B cell (primary cell): ENCODE measurements at regions of chr21 and their contacts with region 1.

Region 1: DNA sequence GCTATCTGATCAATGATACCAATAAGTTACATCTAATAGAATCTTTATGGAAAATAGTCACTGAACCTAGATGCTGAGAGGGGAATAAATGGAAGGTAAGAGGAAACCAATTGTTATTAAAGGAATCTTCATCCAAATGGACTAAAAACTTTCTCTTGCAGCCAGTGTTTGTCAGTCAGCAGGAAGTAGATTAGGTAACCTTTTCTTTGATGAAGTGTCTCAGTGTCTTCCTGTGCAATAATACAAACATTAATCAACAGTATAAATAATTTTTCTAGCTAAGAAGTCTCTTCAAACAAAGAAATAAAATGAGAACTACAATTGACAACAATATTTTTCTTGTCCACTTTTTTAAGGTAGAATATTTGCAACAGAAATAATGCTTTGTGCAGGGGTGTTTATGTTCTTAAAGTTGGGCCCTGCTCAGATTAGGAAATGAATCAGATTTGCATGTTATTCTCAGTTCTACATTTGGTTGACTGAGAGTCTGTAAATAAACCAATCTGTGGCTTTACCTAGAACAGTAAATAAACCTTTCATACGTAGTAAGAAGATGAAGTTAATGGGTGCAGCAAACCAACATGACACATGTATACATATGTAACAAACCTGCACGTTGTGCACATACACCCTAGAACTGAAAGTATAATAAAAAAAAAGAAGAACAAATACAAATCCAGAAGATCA is 391.4 kb downstream of the MRPL39 start:
- DNase-seq: peak; percentile 75
- ATAC-seq: peak; percentile 85
- H3K4me3 ChIP-seq: peak overlapping the region in 1 of 5 experiments; percentile 44
- H3K4me3 Mint-ChIP-seq: peak overlapping the region; percentile 7
- H3K27ac ChIP-seq: peak overlapping the region; percentile 53 to 57
- H3K27ac Mint-ChIP-seq: peak overlapping the region; percentile 44
- H3K4me1 ChIP-seq: peaks cover 21 to 29% of the 10 kb centered on the region in 2 donors
- H3K4me1 Mint-ChIP-seq: peaks cover 35% of the 10 kb centered on the region
- H3K27me3 ChIP-seq: no peaks in the 10 kb centered on the region
- H3K27me3 Mint-ChIP-seq: no peaks in the 10 kb centered on the region
- CTCF ChIP-seq: no peak

Region 2: DNA sequence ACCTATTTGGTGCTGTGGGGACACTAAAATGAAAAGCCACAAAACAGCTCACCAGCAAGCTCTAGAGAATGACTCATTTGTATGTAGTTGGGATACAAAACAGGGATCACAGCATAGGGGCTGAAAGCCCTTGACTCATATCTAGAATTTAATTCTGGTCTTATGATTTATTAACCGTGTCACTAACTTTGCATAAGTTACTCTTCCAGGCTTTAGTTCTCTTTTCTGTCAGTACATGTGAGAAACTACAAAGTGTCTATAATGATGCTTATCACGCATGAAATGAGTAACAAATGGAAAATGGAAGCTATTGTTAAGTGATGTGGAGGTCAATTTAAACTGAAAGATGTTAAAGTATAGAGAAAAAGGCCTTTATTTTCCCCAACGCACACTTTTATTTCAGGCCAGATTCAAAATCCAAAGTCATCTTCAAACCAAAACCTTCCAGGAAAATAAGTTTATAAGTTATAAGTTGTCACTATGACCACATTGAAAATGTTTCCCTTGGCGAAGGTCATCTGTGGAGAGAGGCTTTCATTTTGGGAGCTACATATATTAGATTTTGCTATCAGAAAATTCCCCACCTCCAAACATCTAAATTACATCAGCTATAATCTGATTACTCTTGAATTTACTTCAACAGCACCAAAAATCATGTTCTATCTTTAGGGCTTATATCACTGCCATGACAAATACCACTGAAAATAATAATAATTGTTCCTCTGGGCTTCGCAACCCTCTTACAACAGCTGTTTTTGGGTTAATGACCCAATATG is 39.0 kb before region 1 on chr21:
- CTCF ChIA-PET with region 1: no interaction called
- POLR2A ChIA-PET with region 1: no interaction called
- intact Hi-C with region 1: loop called (anchors 5 kb)
- DNase-seq: peak; percentile 77
- ATAC-seq: peak; percentile 80
- H3K4me3 ChIP-seq: peak overlapping the region in 1 of 5 experiments; percentile 34
- H3K4me3 Mint-ChIP-seq: peak overlapping the region; percentile 3
- H3K27ac ChIP-seq: peak overlapping the region; percentile 83 to 92
- H3K27ac Mint-ChIP-seq: peak overlapping the region; percentile 53
- H3K4me1 ChIP-seq: peaks cover 40 to 46% of the 10 kb centered on the region in 2 donors
- H3K4me1 Mint-ChIP-seq: peaks cover 62% of the 10 kb centered on the region
- H3K27me3 ChIP-seq: no peaks in the 10 kb centered on the region
- H3K27me3 Mint-ChIP-seq: no peaks in the 10 kb centered on the region
- CTCF ChIP-seq: no peak

Region 3: GRCh38 chr21:25234857-25235801 is 19.3 kb after region 1 on chr21:
- CTCF ChIA-PET with region 1: no interaction called
- POLR2A ChIA-PET with region 1: no interaction called
- intact Hi-C with region 1: loop called (anchors 2 kb)
- DNase-seq: peak; percentile 42
- ATAC-seq: peak; percentile 58
- H3K4me3 ChIP-seq: peak overlapping the region in 1 of 5 experiments; percentile 43
- H3K4me3 Mint-ChIP-seq: peak overlapping the region; percentile 65
- H3K27ac ChIP-seq: peak overlapping the region; percentile 8 to 58
- H3K27ac Mint-ChIP-seq: peak overlapping the region; percentile 75
- H3K4me1 ChIP-seq: peaks cover 9 to 20% of the 10 kb centered on the region in 2 donors
- H3K4me1 Mint-ChIP-seq: peaks cover 31% of the 10 kb centered on the region
- H3K27me3 ChIP-seq: no peaks in the 10 kb centered on the region
- H3K27me3 Mint-ChIP-seq: no peaks in the 10 kb centered on the region
- CTCF ChIP-seq: no peak

Region 4: GRCh38 chr21:25273959-25274358 is 58.1 kb after region 1 on chr21:
- CTCF ChIA-PET with region 1: no interaction called
- POLR2A ChIA-PET with region 1: no interaction called
- intact Hi-C with region 1: no loop called
- DNase-seq: peak; percentile 6
- ATAC-seq: no peak
- H3K4me3 ChIP-seq: no peak overlapping the region
- H3K4me3 Mint-ChIP-seq: no peak overlapping the region
- H3K27ac ChIP-seq: no peak overlapping the region
- H3K27ac Mint-ChIP-seq: no peak overlapping the region
- H3K4me1 ChIP-seq: peaks cover 0 to 4% of the 10 kb centered on the region in 2 donors
- H3K4me1 Mint-ChIP-seq: peaks cover 10% of the 10 kb centered on the region
- H3K27me3 ChIP-seq: no peaks in the 10 kb centered on the region
- H3K27me3 Mint-ChIP-seq: no peaks in the 10 kb centered on the region
- CTCF ChIP-seq: no peak

Region 5: GRCh38 chr21:25550352-25551120 is 334.7 kb after region 1 on chr21:
- CTCF ChIA-PET with region 1: no interaction called
- POLR2A ChIA-PET with region 1: no interaction called
- intact Hi-C with region 1: no loop called
- DNase-seq: no peak
- ATAC-seq: no peak
- H3K4me3 ChIP-seq: no peak overlapping the region
- H3K4me3 Mint-ChIP-seq: no peak overlapping the region
- H3K27ac ChIP-seq: no peak overlapping the region
- H3K27ac Mint-ChIP-seq: no peak overlapping the region
- H3K4me1 ChIP-seq: no peaks in the 10 kb centered on the region
- H3K4me1 Mint-ChIP-seq: no peaks in the 10 kb centered on the region
- H3K27me3 ChIP-seq: no peaks in the 10 kb centered on the region
- H3K27me3 Mint-ChIP-seq: no peaks in the 10 kb centered on the region
- CTCF ChIP-seq: no peak